Natural killer cell (primary cell): ENCODE measurements at regions of chr2 and their contacts with region 1.

Region 1: GRCh38 chr2:174750923-174751441 is 13.3 kb downstream of the CHRNA1 start:
- DNase-seq: peak; percentile 28 to 85
- ATAC-seq: peak; percentile 78
- H3K4me3 ChIP-seq: no peak overlapping the region
- H3K4me3 Mint-ChIP-seq: peak overlapping the region; percentile 45
- H3K27ac ChIP-seq: peak overlapping the region; percentile 30
- H3K27ac Mint-ChIP-seq: peak overlapping the region; percentile 73 to 74
- H3K4me1 ChIP-seq: peaks cover 28% of the 10 kb centered on the region
- H3K4me1 Mint-ChIP-seq: peaks cover 9 to 31% of the 10 kb centered on the region in 2 donors
- H3K27me3 ChIP-seq: no peaks in the 10 kb centered on the region
- H3K27me3 Mint-ChIP-seq: peaks cover 0 to 2% of the 10 kb centered on the region in 2 donors
- CTCF ChIP-seq: no peak

Region 2: DNA sequence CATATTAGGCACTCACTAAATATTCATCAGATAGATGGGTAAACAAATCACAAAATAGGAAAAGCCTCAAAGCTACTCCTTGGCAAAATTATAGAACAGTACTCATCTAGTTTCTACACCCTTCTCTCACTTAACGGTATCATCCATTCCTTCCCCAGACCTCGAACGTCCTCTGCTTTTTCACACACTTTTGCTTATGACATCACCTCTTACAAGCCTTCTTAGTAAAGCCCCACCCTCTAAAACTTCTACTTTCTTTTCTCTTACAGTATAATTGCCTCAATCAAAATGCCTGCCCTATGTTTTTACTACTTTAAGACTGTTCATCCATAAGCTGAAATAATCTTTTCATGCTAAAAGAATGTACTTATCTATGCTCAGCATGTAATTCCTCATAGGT is 246.1 kb after region 1 on chr2:
- intact Hi-C with region 1: loop called (anchors 10 kb)
- DNase-seq: no peak
- ATAC-seq: no peak
- H3K4me3 ChIP-seq: no peak overlapping the region
- H3K4me3 Mint-ChIP-seq: no peak overlapping the region
- H3K27ac ChIP-seq: no peak overlapping the region
- H3K27ac Mint-ChIP-seq: no peak overlapping the region
- H3K4me1 ChIP-seq: no peaks in the 10 kb centered on the region
- H3K4me1 Mint-ChIP-seq: no peaks in the 10 kb centered on the region
- H3K27me3 ChIP-seq: peaks cover 10% of the 10 kb centered on the region
- H3K27me3 Mint-ChIP-seq: peaks cover 24 to 27% of the 10 kb centered on the region in 2 donors
- CTCF ChIP-seq: no peak

Region 3: DNA sequence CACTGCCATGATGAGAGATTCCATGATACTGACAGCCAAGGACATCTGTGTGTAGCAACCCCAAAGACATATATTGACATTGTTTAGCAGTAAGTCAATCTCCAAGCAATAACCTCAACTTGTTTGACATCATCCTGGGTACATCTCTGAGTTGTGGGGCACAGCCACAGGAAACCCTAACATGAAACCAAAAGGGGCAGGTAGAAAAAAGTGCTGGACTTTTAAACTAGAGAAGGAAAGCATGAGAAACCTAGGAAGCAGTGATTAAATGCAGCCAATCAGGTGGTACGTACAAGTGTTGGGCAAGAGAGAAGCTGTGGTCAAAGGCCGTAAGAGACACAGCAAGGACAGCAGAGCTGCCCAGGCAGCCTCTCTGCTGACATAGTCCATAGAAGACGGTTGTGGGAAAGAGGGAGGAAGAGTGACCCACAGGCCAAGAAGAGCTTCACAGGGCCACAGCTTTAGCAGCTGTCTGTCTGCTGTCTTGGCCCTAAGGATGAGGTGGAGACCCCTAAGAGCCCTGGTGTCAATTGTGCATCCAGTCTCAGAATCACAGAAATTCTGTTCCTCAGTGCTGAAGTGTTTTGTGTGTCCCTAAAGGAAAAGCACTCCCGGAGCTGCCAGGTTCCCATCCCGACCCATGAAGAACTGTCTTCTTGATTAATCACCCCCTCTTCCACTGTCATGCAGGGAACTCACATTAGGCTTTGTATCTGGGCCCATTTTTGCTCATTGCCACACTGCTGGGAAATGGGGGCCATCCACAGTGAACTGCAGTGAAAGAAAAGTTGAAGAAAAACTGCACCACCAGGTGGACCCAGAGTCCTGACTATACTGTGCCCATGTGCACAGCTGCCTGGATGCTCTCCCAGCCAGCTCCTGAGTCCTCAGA is 279.6 kb after region 1 on chr2:
- intact Hi-C with region 1: no loop called
- DNase-seq: peak in 1 of 2 donors; percentile 17
- ATAC-seq: no peak
- H3K4me3 ChIP-seq: no peak overlapping the region
- H3K4me3 Mint-ChIP-seq: no peak overlapping the region
- H3K27ac ChIP-seq: no peak overlapping the region
- H3K27ac Mint-ChIP-seq: no peak overlapping the region
- H3K4me1 ChIP-seq: no peaks in the 10 kb centered on the region
- H3K4me1 Mint-ChIP-seq: no peaks in the 10 kb centered on the region
- H3K27me3 ChIP-seq: no peaks in the 10 kb centered on the region
- H3K27me3 Mint-ChIP-seq: no peaks in the 10 kb centered on the region
- CTCF ChIP-seq: no peak